Caco-2 (cell line): ENCODE measurements at regions of chr9 and their contacts with region 1.

Region 1: DNA sequence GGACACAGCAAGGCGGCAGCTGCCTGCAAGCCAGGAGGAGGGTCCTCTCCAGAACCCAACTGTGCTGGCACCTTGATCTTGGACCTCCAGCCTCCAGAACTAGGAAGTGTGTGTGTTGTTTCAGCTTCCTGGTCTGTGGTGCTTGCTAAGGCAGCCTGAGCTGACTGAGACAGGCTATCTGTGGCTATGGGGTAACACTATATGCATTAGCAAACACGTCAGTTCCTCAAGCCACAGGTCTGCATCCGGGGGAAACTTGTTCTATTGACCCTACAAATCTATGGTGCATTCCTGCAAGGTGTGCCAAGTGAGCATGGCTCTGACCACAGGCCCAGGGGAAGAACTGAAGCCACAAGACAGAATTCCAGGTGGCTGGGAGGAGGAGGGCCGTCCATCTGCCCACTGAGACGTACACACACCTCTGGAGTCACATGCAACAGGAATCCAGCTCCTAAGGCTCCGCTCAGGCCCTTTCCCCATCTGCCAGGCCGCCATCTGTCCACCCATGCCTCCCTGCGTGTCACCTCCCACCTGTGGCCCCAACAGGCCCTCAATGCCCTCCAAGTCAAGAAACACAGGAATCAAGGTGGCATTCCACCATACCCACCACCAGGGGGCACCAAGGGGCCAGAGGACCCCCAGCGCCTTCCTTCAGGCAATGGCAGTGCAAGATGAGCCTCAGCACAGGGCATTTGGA is 174.9 kb downstream of the ROR2 start:
- DNase-seq: peak; percentile 55 to 64
- H3K4me3 ChIP-seq: no peak overlapping the region
- H3K4me3 Mint-ChIP-seq: no peak overlapping the region
- H3K27ac Mint-ChIP-seq: no peak overlapping the region
- H3K4me1 ChIP-seq: no peaks in the 10 kb centered on the region
- H3K4me1 Mint-ChIP-seq: peaks cover 7% of the 10 kb centered on the region
- H3K27me3 ChIP-seq: no peaks in the 10 kb centered on the region; the same call in 1 of the 2 replicates
- H3K27me3 Mint-ChIP-seq: peaks cover 4% of the 10 kb centered on the region
- CTCF ChIP-seq: peak; percentile 67 to 73

Region 2: DNA sequence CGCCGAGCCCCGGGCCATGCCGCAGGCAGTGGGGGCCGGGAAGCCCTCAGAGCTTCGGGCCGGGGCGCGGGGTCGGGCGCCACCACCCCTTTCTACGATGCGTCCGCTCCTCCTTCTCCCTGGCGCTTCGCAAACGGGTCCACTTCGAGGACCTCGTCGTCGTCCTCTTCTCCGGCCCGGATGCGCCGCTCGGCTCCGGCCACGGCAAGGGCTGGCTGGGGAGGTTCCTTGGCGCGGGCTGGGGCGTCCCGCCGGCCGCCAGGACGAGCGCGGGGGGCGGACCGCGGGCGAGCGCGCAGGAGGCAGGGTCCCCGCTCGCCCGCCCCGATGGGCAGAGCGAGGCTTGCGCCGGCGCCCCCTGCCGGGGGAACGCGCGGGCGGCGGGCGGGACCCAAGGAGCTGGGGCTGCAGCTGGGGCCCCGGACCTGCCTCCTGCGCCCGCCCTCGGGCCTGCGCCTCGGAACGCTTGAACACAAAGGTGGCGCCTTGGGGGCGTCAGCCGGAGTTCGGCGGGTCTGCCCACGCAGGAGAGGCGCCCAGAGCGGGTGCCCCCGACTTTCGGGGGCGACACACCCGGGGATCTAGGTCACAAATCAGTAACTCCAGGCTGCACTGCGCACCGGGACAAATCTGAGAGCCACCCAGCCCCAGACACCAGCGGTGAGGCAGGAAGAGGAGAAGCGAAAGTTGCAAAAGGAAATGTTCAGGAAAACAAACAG is 174.9 kb after region 1 on chr9 and contains the start of gene ROR2:
- CTCF ChIA-PET with region 1: interaction called, 3 read pairs
- POLR2A ChIA-PET with region 1: no interaction called
- intact Hi-C with region 1: loop called (anchors 1 kb)
- DNase-seq: peak in 1 of 2 experiments; percentile 76
- H3K4me3 ChIP-seq: peak within 1 kb of the TSS; percentile 29
- H3K4me3 Mint-ChIP-seq: peak within 1 kb of the TSS; percentile 73
- H3K27ac Mint-ChIP-seq: no peak within 1 kb of the TSS
- H3K4me1 ChIP-seq: no peaks in the 10 kb centered on the region
- H3K4me1 Mint-ChIP-seq: peaks cover 8% of the 10 kb centered on the region
- H3K27me3 ChIP-seq: no peaks in the 10 kb centered on the region
- H3K27me3 Mint-ChIP-seq: no peaks in the 10 kb centered on the region
- CTCF ChIP-seq: peak in 1 of 2 experiments; percentile 19
- total RNA-seq, gene ROR2: 0.68 and 0.95 TPM in 2 replicates

Region 3: DNA sequence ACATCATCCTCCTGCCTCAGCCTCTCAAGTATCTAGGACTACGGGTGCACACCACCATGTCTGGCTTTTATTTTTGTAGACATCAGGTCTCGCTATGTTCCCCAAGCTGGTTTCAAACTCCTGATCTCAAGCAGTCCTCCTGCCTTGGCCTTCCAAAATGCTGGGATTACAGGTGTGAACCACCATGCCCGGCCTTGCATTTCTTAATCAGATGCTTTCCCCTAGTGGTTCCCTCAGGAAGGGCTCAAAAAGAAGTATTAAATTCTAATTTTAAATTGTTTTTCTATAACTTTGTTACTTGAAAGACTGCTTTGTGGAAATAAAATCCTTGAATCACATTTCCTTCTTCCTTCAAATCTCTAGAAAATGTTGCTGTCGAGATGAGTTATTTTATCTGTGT is 254.4 kb after region 1 on chr9:
- CTCF ChIA-PET with region 1: no interaction called
- POLR2A ChIA-PET with region 1: no interaction called
- intact Hi-C with region 1: loop called (anchors 10 kb)
- DNase-seq: peak in 1 of 2 experiments; percentile 1
- H3K4me3 ChIP-seq: no peak overlapping the region
- H3K4me3 Mint-ChIP-seq: no peak overlapping the region
- H3K27ac Mint-ChIP-seq: no peak overlapping the region
- H3K4me1 ChIP-seq: no peaks in the 10 kb centered on the region
- H3K4me1 Mint-ChIP-seq: no peaks in the 10 kb centered on the region
- H3K27me3 ChIP-seq: no peaks in the 10 kb centered on the region
- H3K27me3 Mint-ChIP-seq: no peaks in the 10 kb centered on the region
- CTCF ChIP-seq: peak; percentile 24 to 28

Region 4: DNA sequence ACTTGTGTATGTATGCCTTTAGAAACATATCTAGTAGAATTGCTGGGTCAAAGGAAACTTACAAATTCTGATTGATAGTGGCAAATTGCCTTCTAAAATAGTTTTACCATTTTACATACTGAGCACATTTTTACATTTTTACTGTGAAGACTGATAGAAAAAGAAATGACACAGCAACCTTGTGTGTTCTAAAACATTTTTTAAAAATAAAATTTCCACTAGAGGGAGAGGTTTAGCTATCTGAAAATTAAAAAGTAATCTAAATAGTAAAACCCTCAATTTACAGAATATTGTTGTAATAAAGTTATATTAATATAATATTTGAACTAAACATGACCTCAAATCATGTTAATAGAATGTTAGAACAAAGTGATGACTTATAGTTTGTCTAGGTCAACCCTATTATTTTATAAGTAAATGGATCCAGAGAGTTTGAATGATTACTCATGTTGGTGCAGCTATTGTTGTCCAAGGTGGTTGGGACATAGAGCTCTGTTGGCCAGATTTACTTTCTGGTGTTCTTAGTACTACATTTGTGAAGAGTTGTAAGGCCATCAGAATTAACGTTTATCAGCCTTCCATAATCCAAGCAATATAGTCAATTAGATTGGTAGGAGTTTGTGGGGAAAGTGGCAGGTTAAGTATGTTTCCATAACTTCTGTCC is 567.8 kb after region 1 on chr9:
- CTCF ChIA-PET with region 1: no interaction called
- POLR2A ChIA-PET with region 1: no interaction called
- intact Hi-C with region 1: no loop called
- DNase-seq: no peak
- H3K4me3 ChIP-seq: no peak overlapping the region
- H3K4me3 Mint-ChIP-seq: no peak overlapping the region
- H3K27ac Mint-ChIP-seq: no peak overlapping the region
- H3K4me1 ChIP-seq: no peaks in the 10 kb centered on the region
- H3K4me1 Mint-ChIP-seq: no peaks in the 10 kb centered on the region
- H3K27me3 ChIP-seq: no peaks in the 10 kb centered on the region
- H3K27me3 Mint-ChIP-seq: no peaks in the 10 kb centered on the region
- CTCF ChIP-seq: no peak